ENCODE measurements at regions of chr3 and their contacts with region 1.

Region 1: DNA sequence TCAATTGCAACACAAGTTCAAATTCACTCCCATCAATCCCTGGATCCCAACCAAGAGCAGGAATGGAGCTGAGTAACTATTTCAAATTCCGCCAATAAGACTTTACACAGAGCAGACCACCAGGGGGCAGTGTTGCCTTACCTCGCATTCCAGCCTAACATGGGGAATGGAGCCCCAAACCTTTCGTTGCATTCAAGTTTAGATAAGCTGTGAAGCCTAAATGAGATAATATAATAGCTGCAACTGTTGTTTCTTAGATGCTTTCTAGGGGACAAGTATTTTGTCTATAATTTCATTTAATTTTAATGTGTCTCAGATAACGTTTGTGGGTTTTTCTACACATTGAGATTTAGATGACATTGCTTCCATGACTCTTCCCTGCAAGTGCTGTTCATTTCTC is 186.7 kb downstream of the NSUN3 start:
- DNase-seq: peak; percentile 80
- H3K4me3 ChIP-seq: no peak overlapping the region
- H3K27ac ChIP-seq: no peak overlapping the region
- H3K4me1 ChIP-seq: peaks cover 9% of the 10 kb centered on the region
- H3K27me3 ChIP-seq: peaks cover 6% of the 10 kb centered on the region
- CTCF ChIP-seq: peak; percentile 95

Region 2: GRCh38 chr3:94285870-94286269 is 36.3 kb after region 1 on chr3:
- CTCF ChIA-PET with region 1: interaction called, 6 read pairs
- POLR2A ChIA-PET with region 1: no interaction called
- intact Hi-C with region 1: loop called (anchors 5 kb)
- DNase-seq: peak; percentile 57
- H3K4me3 ChIP-seq: no peak overlapping the region
- H3K27ac ChIP-seq: no peak overlapping the region
- H3K4me1 ChIP-seq: no peaks in the 10 kb centered on the region
- H3K27me3 ChIP-seq: no peaks in the 10 kb centered on the region
- CTCF ChIP-seq: peak; percentile 60

Region 3: GRCh38 chr3:94513600-94513999 is 264.0 kb after region 1 on chr3:
- CTCF ChIA-PET with region 1: no interaction called
- POLR2A ChIA-PET with region 1: no interaction called
- intact Hi-C with region 1: loop called (anchors 5 kb)
- DNase-seq: no peak
- H3K4me3 ChIP-seq: no peak overlapping the region
- H3K27ac ChIP-seq: no peak overlapping the region
- H3K4me1 ChIP-seq: no peaks in the 10 kb centered on the region
- H3K27me3 ChIP-seq: no peaks in the 10 kb centered on the region
- CTCF ChIP-seq: no peak